ENCODE measurements at regions of chr17 and their contacts with region 1.

Region 1: DNA sequence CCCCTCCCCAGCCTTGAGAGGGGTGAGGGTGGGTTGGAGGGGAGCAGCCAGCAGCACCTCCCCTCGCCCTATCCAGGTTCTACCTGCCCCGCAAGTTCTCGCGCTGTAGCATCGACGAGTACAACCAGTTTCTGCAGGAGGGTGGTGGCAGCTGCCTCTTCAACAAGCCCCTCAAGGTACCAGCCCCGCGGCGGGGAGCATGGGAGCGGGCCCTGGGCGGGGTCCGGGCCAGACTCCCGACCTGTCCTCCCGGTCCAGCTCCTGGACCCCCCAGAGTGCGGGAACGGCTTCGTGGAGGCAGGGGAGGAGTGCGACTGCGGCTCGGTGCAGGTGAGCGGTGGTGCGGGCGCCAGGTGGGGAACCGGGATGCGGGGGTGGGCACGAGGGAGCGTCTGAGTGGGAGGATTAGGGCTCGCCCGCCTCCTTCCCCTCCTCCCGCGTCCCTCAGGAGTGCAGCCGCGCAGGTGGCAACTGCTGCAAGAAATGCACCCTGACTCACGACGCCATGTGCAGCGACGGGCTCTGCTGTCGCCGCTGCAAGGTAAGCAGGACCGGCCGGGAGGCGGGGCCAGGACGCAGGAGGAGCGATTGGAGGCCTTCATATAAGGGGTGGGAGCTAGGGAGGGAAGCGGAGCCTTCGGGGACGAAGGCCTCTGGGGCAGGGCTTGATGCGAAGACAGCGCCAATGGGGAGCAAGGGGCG is 16.5 kb downstream of the ADAM11 start:
- H3K4me3 ChIP-seq: peak overlapping the region; percentile 58
- H3K27ac ChIP-seq: peak overlapping the region; percentile 25; the same call in 1 of the 2 replicates
- H3K4me1 ChIP-seq: no peaks in the 10 kb centered on the region
- CTCF ChIP-seq: peak; percentile 36; the same call in 1 of the 2 replicates

Region 2: DNA sequence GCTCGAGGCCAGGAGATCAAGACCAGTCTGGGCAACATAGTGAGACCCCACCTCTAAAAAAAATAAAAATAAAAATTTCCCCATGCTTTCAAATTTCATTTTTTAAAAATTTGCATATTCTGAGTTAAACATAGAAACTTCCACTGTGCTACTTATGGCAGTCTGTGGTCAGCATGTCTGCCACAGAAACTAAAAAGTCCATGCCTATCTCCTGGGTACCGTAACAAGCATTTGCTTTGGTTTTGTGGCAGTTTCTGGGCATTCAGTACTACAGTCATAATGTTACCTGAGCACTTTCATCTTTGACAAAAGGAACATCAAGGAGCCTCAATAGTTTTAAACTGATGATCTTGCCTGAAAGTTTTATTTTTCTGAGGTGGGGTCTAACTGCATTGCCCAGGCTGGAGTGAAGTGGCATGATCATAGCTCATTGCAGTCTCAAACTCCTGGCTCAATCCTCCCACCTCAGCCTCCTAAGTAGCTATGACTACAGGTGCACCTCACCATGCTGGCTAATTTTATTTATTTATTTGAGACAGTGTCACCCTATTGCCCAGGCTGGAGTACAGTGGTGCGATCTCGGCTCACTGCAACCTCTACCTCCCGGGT is 372.6 kb before region 1 on chr17:
- CTCF ChIA-PET with region 1: no interaction called
- POLR2A ChIA-PET with region 1: no interaction called
- H3K4me3 ChIP-seq: no peak overlapping the region
- H3K27ac ChIP-seq: no peak overlapping the region
- H3K4me1 ChIP-seq: no peaks in the 10 kb centered on the region
- CTCF ChIP-seq: no peak

Region 3: GRCh38 chr17:44655983-44656710 is 119.1 kb before region 1 on chr17 and contains the start of gene MEIOC:
- CTCF ChIA-PET with region 1: no interaction called
- POLR2A ChIA-PET with region 1: no interaction called
- H3K4me3 ChIP-seq: peak within 1 kb of the TSS; percentile 41
- H3K27ac ChIP-seq: peak within 1 kb of the TSS; percentile 69; the same call in 1 of the 2 replicates
- H3K4me1 ChIP-seq: no peaks in the 10 kb centered on the region
- CTCF ChIP-seq: no peak

Region 4: DNA sequence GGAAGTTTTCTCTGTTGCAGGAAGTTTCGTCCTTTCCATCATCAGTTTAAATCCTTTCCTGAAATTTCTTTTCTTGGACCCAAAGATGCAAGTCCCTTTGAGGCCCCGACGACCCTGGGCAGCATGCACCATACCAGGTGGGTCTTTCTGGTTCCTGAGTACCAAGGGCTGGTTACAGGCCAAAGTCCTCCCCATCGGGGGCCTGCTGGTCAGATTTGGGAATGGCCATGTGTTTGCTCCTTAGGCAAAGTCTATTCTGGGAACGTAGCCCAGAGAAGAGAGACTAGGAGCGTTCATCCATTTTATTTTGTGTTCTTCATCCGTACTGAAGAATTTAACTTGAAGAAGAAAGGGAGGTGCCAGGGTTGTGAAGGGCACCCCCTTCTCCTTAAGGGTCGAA is 34.0 kb before region 1 on chr17:
- CTCF ChIA-PET with region 1: no interaction called
- POLR2A ChIA-PET with region 1: no interaction called
- H3K4me3 ChIP-seq: no peak overlapping the region
- H3K27ac ChIP-seq: no peak overlapping the region
- H3K4me1 ChIP-seq: no peaks in the 10 kb centered on the region
- CTCF ChIP-seq: no peak

Region 5: GRCh38 chr17:44761932-44762810 is 13.1 kb before region 1 on chr17:
- CTCF ChIA-PET with region 1: interaction called, 12 read pairs
- POLR2A ChIA-PET with region 1: interaction called, 8 read pairs
- H3K4me3 ChIP-seq: no peak overlapping the region
- H3K27ac ChIP-seq: no peak overlapping the region
- H3K4me1 ChIP-seq: peaks cover 3% of the 10 kb centered on the region
- CTCF ChIP-seq: no peak

Region 6: DNA sequence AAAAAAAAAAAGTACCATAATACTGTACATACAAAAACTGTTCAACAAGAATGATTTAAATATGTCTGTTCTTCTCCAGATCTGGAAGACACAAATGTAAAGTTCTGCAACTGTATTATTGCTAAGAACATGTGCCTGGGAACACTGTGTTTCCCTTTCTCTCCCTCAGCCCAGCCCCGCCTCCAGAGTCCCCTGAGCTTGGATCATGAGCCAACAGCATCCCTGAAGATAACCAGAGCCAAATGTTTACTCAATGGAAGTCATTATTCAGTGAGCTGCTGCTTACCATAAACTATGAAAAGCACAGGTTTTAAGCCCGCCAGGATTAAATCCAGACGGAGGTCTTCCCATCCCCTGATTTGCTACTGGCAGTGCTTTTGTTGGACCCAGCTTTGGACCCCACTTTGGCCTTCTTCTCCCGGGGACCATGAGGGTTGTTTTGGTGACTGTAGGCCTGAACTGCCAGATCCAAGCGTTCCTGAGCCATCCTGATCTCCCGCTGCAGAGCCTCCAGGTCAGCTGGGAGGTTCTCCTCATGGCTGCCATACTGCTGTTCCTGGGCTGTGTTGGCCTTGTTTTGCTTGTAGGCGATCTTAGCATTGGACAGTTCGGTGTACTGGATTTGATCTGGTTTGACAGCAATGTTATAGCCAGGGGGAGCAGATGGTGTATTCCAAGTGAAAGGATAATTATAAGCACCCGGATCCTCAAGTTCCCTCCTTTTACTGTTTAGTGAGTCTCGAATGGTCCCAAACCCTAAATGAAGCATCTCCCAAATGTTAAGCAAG is 29.2 kb after region 1 on chr17:
- CTCF ChIA-PET with region 1: interaction called, 17 read pairs
- POLR2A ChIA-PET with region 1: no interaction called
- H3K4me3 ChIP-seq: no peak overlapping the region
- H3K27ac ChIP-seq: no peak overlapping the region
- H3K4me1 ChIP-seq: peaks cover 5% of the 10 kb centered on the region
- CTCF ChIP-seq: no peak

Region 7: GRCh38 chr17:44844390-44844830 is 69.1 kb after region 1 on chr17:
- CTCF ChIA-PET with region 1: interaction called, 56 read pairs
- POLR2A ChIA-PET with region 1: interaction called, 9 read pairs
- H3K4me3 ChIP-seq: no peak overlapping the region
- H3K27ac ChIP-seq: no peak overlapping the region; the same call in 1 of the 2 replicates
- H3K4me1 ChIP-seq: peaks cover 3% of the 10 kb centered on the region; the same call in 1 of the 2 replicates
- CTCF ChIP-seq: no peak

Region 8: GRCh38 chr17:44878627-44879221 is 103.4 kb after region 1 on chr17:
- CTCF ChIA-PET with region 1: interaction called, 221 read pairs
- POLR2A ChIA-PET with region 1: interaction called, 9 read pairs
- H3K4me3 ChIP-seq: no peak overlapping the region
- H3K27ac ChIP-seq: no peak overlapping the region
- H3K4me1 ChIP-seq: no peaks in the 10 kb centered on the region
- CTCF ChIP-seq: no peak

Measured in HEK293 (cell line).